A673 (cell line): ENCODE measurements at regions of chr12 and their contacts with region 1.

Region 1: DNA sequence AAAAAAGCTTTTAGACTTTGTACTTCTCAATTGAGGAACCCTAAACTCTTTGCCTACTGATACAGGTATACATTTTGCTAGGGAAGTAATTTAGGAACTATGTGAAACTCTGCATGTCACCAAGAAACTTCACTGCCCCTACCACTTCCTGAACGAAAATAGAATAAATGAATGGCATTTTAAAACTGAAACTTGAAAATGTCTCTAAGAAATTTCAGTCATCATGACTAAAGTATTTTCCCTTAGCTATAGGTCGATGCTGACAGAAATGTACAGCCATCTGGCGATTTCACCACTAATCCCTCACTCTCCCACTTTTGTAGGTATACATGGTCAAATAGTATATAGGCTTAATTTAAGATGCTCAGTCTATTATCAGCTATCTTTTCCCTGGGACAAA is 194.9 kb upstream of the SYT10 start:
- DNase-seq: no peak
- H3K4me3 ChIP-seq: no peak overlapping the region
- H3K27ac ChIP-seq: no peak overlapping the region
- H3K4me1 ChIP-seq: no peaks in the 10 kb centered on the region
- H3K27me3 ChIP-seq: no peaks in the 10 kb centered on the region
- CTCF ChIP-seq: no peak

Region 2: DNA sequence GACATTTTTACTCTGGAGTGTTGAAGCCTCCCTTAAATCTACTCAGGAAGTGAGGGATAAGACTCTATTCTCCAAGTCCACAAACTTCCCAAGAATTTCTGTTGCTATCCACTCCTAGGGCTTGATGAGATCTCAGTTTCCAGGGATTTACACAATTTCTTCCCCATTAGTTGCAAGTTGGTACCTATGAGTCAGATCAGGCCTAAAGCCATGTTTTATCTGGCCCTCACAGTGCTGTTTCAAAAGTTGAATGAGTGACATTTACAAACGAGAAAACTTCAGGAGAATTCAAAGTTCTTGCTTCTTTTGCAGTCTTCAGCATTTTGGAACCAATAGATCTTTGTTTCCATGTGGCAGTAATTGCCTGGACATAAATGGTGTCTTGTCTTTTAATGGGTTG is 38.5 kb before region 1 on chr12:
- CTCF ChIA-PET with region 1: no interaction called
- POLR2A ChIA-PET with region 1: no interaction called
- intact Hi-C with region 1: loop called (anchors 1 kb)
- DNase-seq: no peak
- H3K4me3 ChIP-seq: no peak overlapping the region
- H3K27ac ChIP-seq: no peak overlapping the region
- H3K4me1 ChIP-seq: no peaks in the 10 kb centered on the region
- H3K27me3 ChIP-seq: no peaks in the 10 kb centered on the region
- CTCF ChIP-seq: no peak

Region 3: DNA sequence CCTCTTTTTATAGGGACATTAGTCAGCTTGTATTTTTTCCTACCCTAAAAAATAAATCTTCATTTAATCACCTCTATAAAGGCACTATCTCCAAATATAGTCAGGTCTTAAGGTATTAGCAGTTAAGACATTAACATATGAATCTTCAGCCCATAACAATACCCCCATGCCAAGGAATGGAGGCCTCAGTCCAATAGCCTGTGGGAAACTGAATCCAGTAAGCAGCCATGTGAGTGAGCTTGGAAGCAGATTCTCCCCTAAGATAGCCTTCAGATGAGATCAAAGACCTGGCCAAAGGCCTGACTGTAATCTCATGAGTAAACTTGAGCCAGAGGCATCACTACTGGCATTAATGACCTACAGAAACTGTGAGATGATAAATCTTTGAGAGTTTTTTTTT is 37.1 kb after region 1 on chr12:
- CTCF ChIA-PET with region 1: no interaction called
- POLR2A ChIA-PET with region 1: no interaction called
- intact Hi-C with region 1: no loop called
- DNase-seq: no peak
- H3K4me3 ChIP-seq: no peak overlapping the region
- H3K27ac ChIP-seq: no peak overlapping the region
- H3K4me1 ChIP-seq: no peaks in the 10 kb centered on the region
- H3K27me3 ChIP-seq: no peaks in the 10 kb centered on the region
- CTCF ChIP-seq: no peak